CD8-positive, alpha-beta T cell (primary cell): ENCODE measurements at regions of chr15 and their contacts with region 1.

Region 1: GRCh38 chr15:41230650-41231533 is at the starts of genes CHP1 and EXD1:
- DNase-seq: peak; percentile 89 to 97 (median 94)
- ATAC-seq: peak; percentile 95
- H3K4me3 ChIP-seq: peak within 1 kb of the TSS; percentile 83 to 89
- H3K4me3 Mint-ChIP-seq: peak within 1 kb of the TSS; percentile 89
- H3K27ac ChIP-seq: peak within 1 kb of the TSS; percentile 74 to 85
- H3K27ac Mint-ChIP-seq: peak within 1 kb of the TSS; percentile 90
- H3K4me1 ChIP-seq: peaks cover 27% of the 10 kb centered on the region
- H3K4me1 Mint-ChIP-seq: peaks cover 37% of the 10 kb centered on the region
- H3K27me3 ChIP-seq: no peaks in the 10 kb centered on the region
- H3K27me3 Mint-ChIP-seq: no peaks in the 10 kb centered on the region
- CTCF ChIP-seq: peak; percentile 99
- total RNA-seq, gene CHP1: 25.6 to 28.9 TPM
- total RNA-seq, gene EXD1: not detected

Region 2: DNA sequence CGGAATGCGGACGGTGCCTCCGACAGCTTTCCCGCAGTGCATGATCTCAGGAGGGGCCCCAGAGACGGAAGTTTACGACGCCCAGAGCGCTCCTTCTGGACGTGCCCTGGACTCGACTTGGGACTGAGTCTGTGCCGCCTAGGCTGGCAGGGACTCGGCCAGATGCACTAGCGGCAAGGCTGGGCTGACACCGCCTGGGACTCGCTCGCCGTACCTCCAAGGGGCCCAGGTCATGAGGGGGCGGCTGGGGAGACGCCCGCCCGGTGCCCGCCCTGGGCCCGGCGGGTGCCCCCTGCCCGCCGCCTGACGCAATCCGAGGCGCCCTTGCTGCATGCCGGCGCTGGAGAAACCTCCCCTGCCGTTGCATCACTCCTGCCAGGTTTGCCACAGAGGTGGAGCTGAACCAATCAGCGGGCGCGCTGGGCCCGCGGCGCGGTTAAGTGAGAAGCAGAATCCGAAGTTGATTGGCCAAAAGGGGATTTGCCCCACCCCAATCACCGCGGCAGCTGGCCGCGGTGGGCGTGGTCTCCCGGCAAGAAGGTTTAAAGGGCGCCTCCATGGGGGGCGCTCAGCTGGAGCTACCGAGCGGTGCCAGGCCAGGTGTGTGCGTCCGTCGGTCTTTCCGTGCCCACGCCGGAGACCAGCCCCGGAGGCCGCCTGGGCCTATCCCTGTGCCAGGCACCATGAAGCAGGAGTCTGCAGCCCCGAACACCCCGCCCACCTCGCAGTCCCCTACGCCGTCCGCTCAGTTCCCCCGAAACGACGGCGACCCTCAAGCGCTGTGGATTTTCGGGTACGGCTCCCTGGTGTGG is 277.8 kb before region 1 on chr15 and contains the start of gene CHAC1:
- CTCF ChIA-PET with region 1: no interaction called
- POLR2A ChIA-PET with region 1: interaction called, 3 read pairs
- intact Hi-C with region 1: loop called in 1 of 2 experiments (anchors 5 kb)
- DNase-seq: peak; percentile 84 to 97 (median 94)
- ATAC-seq: peak; percentile 96
- H3K4me3 ChIP-seq: peak within 1 kb of the TSS; percentile 68 to 73
- H3K4me3 Mint-ChIP-seq: peak within 1 kb of the TSS; percentile 93
- H3K27ac ChIP-seq: peak within 1 kb of the TSS in 1 of 2 experiments; percentile 43
- H3K27ac Mint-ChIP-seq: peak within 1 kb of the TSS; percentile 73
- H3K4me1 ChIP-seq: peaks cover 12% of the 10 kb centered on the region
- H3K4me1 Mint-ChIP-seq: peaks cover 16% of the 10 kb centered on the region
- H3K27me3 ChIP-seq: no peaks in the 10 kb centered on the region
- H3K27me3 Mint-ChIP-seq: no peaks in the 10 kb centered on the region
- CTCF ChIP-seq: peak; percentile 20
- total RNA-seq, gene CHAC1: 0.22 to 0.69 TPM

Region 3: DNA sequence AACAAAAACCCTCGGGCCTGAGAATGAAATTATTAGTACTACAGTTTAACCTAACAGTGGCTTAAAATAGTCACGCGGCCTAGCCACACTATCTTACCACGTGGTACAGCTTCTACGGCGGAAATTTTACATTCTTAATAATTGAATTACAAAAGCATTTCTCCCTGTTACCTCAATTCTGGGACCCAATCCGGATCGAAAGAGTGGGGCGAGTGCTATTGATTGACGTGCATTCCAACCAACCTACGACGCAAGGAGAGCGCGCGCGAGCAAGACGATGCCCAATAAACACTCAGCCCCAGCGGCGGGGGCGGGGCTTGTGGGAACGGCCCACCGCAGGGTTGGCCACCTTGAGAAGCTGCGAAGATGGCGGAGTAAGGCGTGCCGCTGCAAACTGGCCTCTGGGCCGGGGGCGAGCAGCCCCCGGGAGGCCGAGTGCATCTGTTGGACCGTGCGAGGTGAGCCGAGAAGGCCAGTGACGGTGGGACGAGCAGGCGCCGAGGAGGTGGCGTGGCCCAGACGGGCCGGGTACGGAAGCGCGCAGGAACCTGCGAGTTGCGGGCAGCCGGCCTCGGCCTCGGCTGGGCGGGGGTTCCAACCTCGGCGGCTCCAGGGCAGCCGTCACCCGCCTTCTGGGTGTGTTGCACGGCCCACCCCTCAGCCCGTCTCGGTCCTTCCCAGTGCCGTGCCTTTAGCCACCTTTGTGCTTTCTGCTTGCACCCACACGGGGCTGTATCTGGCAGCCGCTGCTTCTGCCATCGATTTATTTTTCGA is 52.9 kb after region 1 on chr15:
- CTCF ChIA-PET with region 1: no interaction called
- POLR2A ChIA-PET with region 1: interaction called, 14 read pairs
- intact Hi-C with region 1: loop called (anchors 1 kb)
- DNase-seq: peak; percentile 94 to 100 (median 97)
- ATAC-seq: peak; percentile 96
- H3K4me3 ChIP-seq: peak overlapping the region; percentile 70 to 86
- H3K4me3 Mint-ChIP-seq: peak overlapping the region; percentile 89
- H3K27ac ChIP-seq: peak overlapping the region; percentile 91 to 93
- H3K27ac Mint-ChIP-seq: peak overlapping the region; percentile 95
- H3K4me1 ChIP-seq: peaks cover 25% of the 10 kb centered on the region
- H3K4me1 Mint-ChIP-seq: peaks cover 48% of the 10 kb centered on the region
- H3K27me3 ChIP-seq: no peaks in the 10 kb centered on the region
- H3K27me3 Mint-ChIP-seq: no peaks in the 10 kb centered on the region
- CTCF ChIP-seq: no peak

Region 4: DNA sequence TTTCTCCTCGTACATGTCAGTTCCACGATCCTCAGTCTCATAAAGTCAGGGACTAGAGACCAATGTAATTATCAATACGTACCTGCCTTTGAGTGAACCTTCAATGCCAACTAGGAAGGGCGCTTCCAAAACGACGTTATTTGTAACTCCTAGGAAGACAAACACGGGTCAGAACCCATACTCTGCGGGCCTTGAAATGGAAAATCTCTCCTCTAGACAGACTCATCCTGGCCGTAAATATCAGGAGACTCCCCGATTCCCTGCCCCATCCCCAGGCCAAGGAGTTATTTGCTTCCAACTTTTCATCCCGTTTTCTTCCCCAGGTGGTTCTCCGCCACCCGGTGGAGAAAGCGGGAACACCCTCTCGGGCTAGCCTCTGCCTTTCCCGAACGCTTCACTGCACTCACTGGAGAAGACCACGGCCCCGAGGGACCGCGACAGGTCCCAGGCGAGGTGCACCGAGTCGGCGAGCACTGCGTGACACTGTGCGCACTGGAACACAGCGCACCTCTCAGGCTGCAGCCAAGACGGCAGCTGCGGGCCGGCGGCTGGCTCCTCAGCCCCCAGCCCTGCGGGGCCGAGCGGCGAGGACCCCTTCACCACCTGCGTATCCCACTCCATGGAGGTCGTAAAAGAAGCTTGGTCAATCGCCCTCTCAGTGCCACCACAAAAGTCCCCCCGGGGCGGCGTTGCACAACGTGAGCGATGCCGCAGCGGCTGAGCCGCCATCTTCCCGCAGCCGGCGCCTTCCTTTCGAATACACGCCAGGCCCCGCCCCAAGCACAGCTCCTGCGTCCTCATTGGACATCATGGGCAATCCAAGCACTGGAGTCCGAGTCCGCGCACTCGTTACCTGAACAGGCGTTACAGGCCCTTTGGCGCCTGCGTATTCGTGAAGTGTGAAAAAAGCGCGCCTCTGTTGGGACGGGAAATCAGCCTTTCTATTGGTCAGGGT is 101.2 kb after region 1 on chr15 and contains the start of gene OIP5:
- CTCF ChIA-PET with region 1: interaction called, 3 read pairs
- POLR2A ChIA-PET with region 1: interaction called, 13 read pairs
- intact Hi-C with region 1: loop called (anchors 1 to 2 kb)
- DNase-seq: peak; percentile 95 to 100 (median 96)
- ATAC-seq: peak; percentile 96
- H3K4me3 ChIP-seq: peak within 1 kb of the TSS; percentile 84 to 94
- H3K4me3 Mint-ChIP-seq: peak within 1 kb of the TSS; percentile 97
- H3K27ac ChIP-seq: peak within 1 kb of the TSS; percentile 46 to 63
- H3K27ac Mint-ChIP-seq: peak within 1 kb of the TSS; percentile 87
- H3K4me1 ChIP-seq: peaks cover 14% of the 10 kb centered on the region
- H3K4me1 Mint-ChIP-seq: peaks cover 30% of the 10 kb centered on the region
- H3K27me3 ChIP-seq: no peaks in the 10 kb centered on the region
- H3K27me3 Mint-ChIP-seq: no peaks in the 10 kb centered on the region
- CTCF ChIP-seq: peak; percentile 58
- total RNA-seq, gene OIP5: not detected